Activated T-helper 2 cell treated with anti-CD3 and anti-CD28 coated beads, Interferon-gamma antibody, Interleukin-2, Interleukin-4, amounts not matched to agents 10 μg/mL and 5 μg/mL and 100 μg/mL, durations not matched to agents 14 hours and 24 hours and 36 hours (primary cell): ENCODE measurements at regions of chr12 and their contacts with region 1.

Region 1: DNA sequence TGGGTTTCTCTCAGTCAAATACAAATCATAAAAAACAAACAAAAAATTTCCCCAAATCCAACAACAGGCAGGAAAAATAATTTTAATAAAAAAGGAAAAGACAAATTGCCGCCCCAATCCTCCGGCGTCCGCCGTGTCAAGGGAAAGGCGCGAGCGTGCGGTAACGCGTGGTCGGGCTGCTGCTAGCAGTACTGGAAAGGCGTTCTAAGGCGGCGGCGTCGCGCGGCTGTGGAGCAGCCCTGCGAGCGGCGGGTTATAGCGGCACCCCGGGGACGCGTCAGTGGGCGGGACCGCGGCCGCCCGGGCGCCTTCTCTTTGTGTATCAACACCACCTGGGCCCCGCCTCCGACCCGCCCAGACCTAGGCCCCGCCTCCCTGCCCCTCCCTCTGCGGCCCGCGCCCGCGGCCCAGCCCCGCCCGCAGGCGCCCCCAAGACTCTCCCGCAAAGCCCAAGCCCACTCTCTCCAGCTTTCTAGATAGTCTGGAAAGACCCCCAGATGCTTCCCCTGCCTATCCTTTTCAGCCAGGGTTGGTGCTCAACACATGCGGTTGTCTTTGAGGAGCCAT is at the start of gene SLC38A2:
- DNase-seq: peak; percentile 95
- H3K4me3 Mint-ChIP-seq: peak within 1 kb of the TSS; percentile 92
- H3K27ac Mint-ChIP-seq: peak within 1 kb of the TSS; percentile 95
- H3K4me1 Mint-ChIP-seq: peaks cover 52% of the 10 kb centered on the region
- H3K27me3 Mint-ChIP-seq: no peaks in the 10 kb centered on the region
- total RNA-seq, gene SLC38A2: 141 and 143 TPM in 2 replicates

Region 2: GRCh38 chr12:45990468-45991283 is 382.0 kb before region 1 on chr12 and contains the start of gene SCAF11:
- intact Hi-C with region 1: loop called (anchors 5 kb)
- DNase-seq: peak; percentile 100
- H3K4me3 Mint-ChIP-seq: peak within 1 kb of the TSS; percentile 93
- H3K27ac Mint-ChIP-seq: peak within 1 kb of the TSS; percentile 98
- H3K4me1 Mint-ChIP-seq: peaks cover 38% of the 10 kb centered on the region
- H3K27me3 Mint-ChIP-seq: peaks cover 6% of the 10 kb centered on the region
- total RNA-seq, gene SCAF11: 125 and 128 TPM in 2 replicates

Region 3: GRCh38 chr12:46382964-46383653 is 10.5 kb after region 1 on chr12:
- intact Hi-C with region 1: loop called (anchors 1 kb)
- DNase-seq: peak; percentile 95
- H3K4me3 Mint-ChIP-seq: peak overlapping the region; percentile 85
- H3K27ac Mint-ChIP-seq: peak overlapping the region; percentile 92
- H3K4me1 Mint-ChIP-seq: peaks cover 55% of the 10 kb centered on the region
- H3K27me3 Mint-ChIP-seq: no peaks in the 10 kb centered on the region

Region 4: GRCh38 chr12:46395388-46395787 is 22.8 kb after region 1 on chr12:
- intact Hi-C with region 1: no loop called
- DNase-seq: no peak
- H3K4me3 Mint-ChIP-seq: no peak overlapping the region
- H3K27ac Mint-ChIP-seq: no peak overlapping the region
- H3K4me1 Mint-ChIP-seq: peaks cover 35% of the 10 kb centered on the region
- H3K27me3 Mint-ChIP-seq: no peaks in the 10 kb centered on the region

Region 5: GRCh38 chr12:46546634-46547286 is 174.1 kb after region 1 on chr12:
- intact Hi-C with region 1: loop called (anchors 1 kb)
- DNase-seq: peak; percentile 22
- H3K4me3 Mint-ChIP-seq: peak overlapping the region; percentile 28
- H3K27ac Mint-ChIP-seq: peak overlapping the region; percentile 76
- H3K4me1 Mint-ChIP-seq: peaks cover 62% of the 10 kb centered on the region
- H3K27me3 Mint-ChIP-seq: no peaks in the 10 kb centered on the region

Region 6: DNA sequence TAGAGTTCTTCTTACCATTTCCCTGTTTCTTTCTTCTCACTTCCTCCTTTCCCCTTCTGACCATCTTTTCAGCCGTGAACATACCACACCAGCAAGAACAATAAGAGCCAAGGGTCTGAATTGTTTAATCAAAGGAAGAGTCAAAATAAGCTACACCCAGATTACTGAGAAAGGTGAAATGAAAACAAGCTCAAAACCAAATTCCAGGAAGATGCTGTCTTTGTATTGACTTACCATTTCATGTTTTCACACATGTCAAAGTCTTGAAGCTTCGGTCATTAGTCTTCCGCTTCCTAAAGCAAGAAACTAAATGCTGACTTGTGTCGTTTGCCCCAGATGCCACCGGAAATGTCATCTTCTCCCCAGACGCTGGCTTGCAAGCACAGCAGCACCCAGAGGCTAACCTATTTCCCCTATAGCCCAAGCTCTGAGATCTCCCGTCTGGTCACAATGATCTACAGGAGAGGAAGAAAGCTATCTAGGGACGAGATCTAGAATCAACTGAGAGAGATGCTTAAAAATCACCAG is 843.6 kb after region 1 on chr12:
- intact Hi-C with region 1: loop called (anchors 2 kb)
- DNase-seq: peak; percentile 72
- H3K4me3 Mint-ChIP-seq: peak overlapping the region; percentile 97
- H3K27ac Mint-ChIP-seq: peak overlapping the region; percentile 96
- H3K4me1 Mint-ChIP-seq: peaks cover 52% of the 10 kb centered on the region
- H3K27me3 Mint-ChIP-seq: no peaks in the 10 kb centered on the region